Gastrocnemius medialis (tissue), 4 donors: ENCODE measurements at regions of chr6 and their contacts with region 1.

Region 1: GRCh38 chr6:112203577-112204349 is 50.6 kb downstream of the LAMA4 start:
- DNase-seq: no peak
- ATAC-seq: peak in 1 of 2 donors; percentile 51
- H3K4me3 ChIP-seq: no peak overlapping the region
- H3K27ac ChIP-seq: peak overlapping the region; percentile 41 to 56 (median 48)
- H3K4me1 ChIP-seq: peaks cover 0 to 7% of the 10 kb centered on the region in 2 donors
- H3K27me3 ChIP-seq: no peaks in the 10 kb centered on the region
- CTCF ChIP-seq: no peak
- POLR2A ChIP-seq: no peak

Region 2: DNA sequence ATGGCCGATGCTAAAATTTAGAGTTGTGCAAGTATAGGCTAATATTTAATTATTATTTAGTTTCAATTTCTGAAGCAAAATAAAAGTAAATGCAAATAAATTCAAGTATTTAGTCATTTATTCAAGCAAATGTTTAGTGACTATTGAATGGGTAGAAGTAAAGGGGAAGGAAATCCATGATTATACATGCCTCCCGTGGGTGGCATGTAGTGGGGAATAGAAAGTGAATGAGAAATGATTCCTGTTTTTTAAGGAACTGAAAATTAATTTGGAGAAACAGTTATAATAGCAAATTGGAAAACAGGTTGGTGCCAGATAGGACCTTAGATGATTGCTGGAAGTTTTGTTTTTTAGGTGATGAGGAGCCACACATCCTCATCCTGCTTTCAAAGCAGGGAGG is 81.0 kb before region 1 on chr6:
- in situ Hi-C with region 1: no loop called
- intact Hi-C with region 1: no loop called
- DNase-seq: no peak
- ATAC-seq: no peak
- H3K4me3 ChIP-seq: no peak overlapping the region
- H3K27ac ChIP-seq: no peak overlapping the region
- H3K4me1 ChIP-seq: no peaks in the 10 kb centered on the region
- H3K27me3 ChIP-seq: no peaks in the 10 kb centered on the region
- CTCF ChIP-seq: no peak
- POLR2A ChIP-seq: no peak

Region 3: DNA sequence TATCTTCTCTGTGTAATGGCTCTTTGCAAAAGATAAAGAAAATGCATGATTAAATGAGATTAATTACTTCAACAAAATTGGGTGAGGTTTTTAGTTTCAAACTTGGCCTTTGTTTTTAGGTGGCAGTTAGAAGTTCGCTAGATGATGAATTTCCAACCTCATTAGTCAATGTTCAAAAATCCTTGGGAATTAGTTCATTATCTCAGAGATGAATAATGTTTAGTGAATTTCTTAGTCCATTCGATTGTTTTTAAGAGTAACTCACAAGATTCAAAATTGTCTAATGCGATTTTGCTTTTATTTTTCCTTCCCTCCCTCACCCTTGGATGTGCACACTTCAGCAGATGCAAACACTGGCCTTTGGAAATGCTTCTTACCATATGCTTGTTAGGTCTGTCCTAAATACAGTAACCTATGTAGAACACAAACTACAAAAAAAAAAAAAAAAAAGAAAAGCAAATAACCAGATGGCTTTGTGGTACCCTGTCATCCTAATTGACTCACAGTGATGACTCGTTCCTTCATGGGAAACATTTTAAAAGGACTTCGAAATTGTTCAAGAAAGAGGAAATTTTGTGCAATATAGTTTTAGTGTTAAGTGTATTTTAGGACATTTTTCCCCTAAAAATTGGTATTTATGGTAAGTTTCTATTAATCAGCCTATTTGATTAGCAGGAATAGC is 49.7 kb before region 1 on chr6:
- in situ Hi-C with region 1: no loop called
- intact Hi-C with region 1: no loop called
- DNase-seq: no peak
- ATAC-seq: no peak
- H3K4me3 ChIP-seq: no peak overlapping the region
- H3K27ac ChIP-seq: no peak overlapping the region
- H3K4me1 ChIP-seq: no peaks in the 10 kb centered on the region
- H3K27me3 ChIP-seq: no peaks in the 10 kb centered on the region
- CTCF ChIP-seq: no peak
- POLR2A ChIP-seq: no peak

Region 4: GRCh38 chr6:112253841-112254816 is 50.4 kb after region 1 on chr6 and contains the start of gene LAMA4:
- in situ Hi-C with region 1: loop called in 1 of 4 experiments (anchors 10 kb)
- intact Hi-C with region 1: loop called (anchors 10 kb)
- DNase-seq: no peak
- ATAC-seq: peak; percentile 50 to 53
- H3K4me3 ChIP-seq: peak within 1 kb of the TSS; percentile 67 to 86 (median 70)
- H3K27ac ChIP-seq: peak within 1 kb of the TSS; percentile 72 to 82 (median 80)
- H3K4me1 ChIP-seq: peaks cover 0 to 8% of the 10 kb centered on the region in 2 donors
- H3K27me3 ChIP-seq: no peaks in the 10 kb centered on the region
- CTCF ChIP-seq: no peak
- POLR2A ChIP-seq: peak in 1 of 2 donors; percentile 24
- total RNA-seq, gene LAMA4: 4.4 to 19.1 (median 7.4) TPM

Region 5: GRCh38 chr6:112539355-112539754 is 335.6 kb after region 1 on chr6:
- in situ Hi-C with region 1: no loop called
- intact Hi-C with region 1: no loop called
- DNase-seq: no peak
- ATAC-seq: no peak
- H3K4me3 ChIP-seq: no peak overlapping the region
- H3K27ac ChIP-seq: no peak overlapping the region
- H3K4me1 ChIP-seq: no peaks in the 10 kb centered on the region
- H3K27me3 ChIP-seq: no peaks in the 10 kb centered on the region
- CTCF ChIP-seq: no peak
- POLR2A ChIP-seq: no peak